K562 (cell line): ENCODE measurements at regions of chr6 and their contacts with region 1.

Region 1: GRCh38 chr6:161748535-161749416 is 474.9 kb upstream of the AGPAT4 start:
- DNase-seq: peak; percentile 53 to 68 (median 60)
- ATAC-seq: peak; percentile 93
- H3K4me3 ChIP-seq: no peak overlapping the region
- H3K27ac ChIP-seq: no peak overlapping the region
- H3K4me1 ChIP-seq: no peaks in the 10 kb centered on the region
- H3K27me3 ChIP-seq: no peaks in the 10 kb centered on the region; a peak in 1 of 5 replicates
- CTCF ChIP-seq: peak; percentile 69 to 72 (median 70)
- EP300 ChIP-seq: no peak
- POLR2A ChIP-seq: no peak
- RAD21 ChIP-seq: peak; percentile 48 to 61

Region 2: DNA sequence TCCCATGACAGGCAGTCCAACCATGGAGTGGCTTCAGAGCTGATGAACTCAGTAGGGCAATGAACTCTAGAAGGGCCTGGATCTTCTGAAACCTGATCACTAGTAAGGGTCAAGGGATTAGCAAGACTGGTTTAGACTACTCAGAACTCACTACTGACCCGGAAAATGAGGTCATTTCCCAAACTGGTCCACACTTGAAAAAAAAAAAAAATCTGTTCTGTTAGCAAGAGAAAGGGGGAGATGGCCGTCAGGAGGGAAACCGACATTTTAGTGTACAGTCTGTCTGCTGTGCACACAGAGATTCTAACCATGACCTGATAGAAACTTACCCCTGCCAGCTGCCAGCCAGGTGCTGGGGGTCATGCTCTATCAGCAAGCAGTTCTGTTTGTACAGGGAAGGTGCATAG is 212.5 kb before region 1 on chr6:
- CTCF ChIA-PET with region 1: no interaction called
- POLR2A ChIA-PET with region 1: no interaction called
- in situ Hi-C with region 1: no loop called
- intact Hi-C with region 1: no loop called
- DNase-seq: no peak
- ATAC-seq: no peak
- H3K4me3 ChIP-seq: no peak overlapping the region
- H3K27ac ChIP-seq: no peak overlapping the region
- H3K4me1 ChIP-seq: no peaks in the 10 kb centered on the region; a peak in 1 of 5 replicates
- H3K27me3 ChIP-seq: peaks cover 4 to 8% of the 10 kb centered on the region in 2 experiments; a peak in 4 of 5 replicates
- CTCF ChIP-seq: no peak
- EP300 ChIP-seq: no peak
- POLR2A ChIP-seq: no peak
- RAD21 ChIP-seq: no peak

Region 3: GRCh38 chr6:161922631-161923119 is 173.9 kb after region 1 on chr6:
- CTCF ChIA-PET with region 1: interaction called, 3 read pairs
- POLR2A ChIA-PET with region 1: no interaction called
- in situ Hi-C with region 1: no loop called
- intact Hi-C with region 1: loop called (anchors 2 kb)
- DNase-seq: peak; percentile 24 to 55 (median 38)
- ATAC-seq: peak; percentile 97
- H3K4me3 ChIP-seq: no peak overlapping the region
- H3K27ac ChIP-seq: no peak overlapping the region
- H3K4me1 ChIP-seq: no peaks in the 10 kb centered on the region
- H3K27me3 ChIP-seq: no peaks in the 10 kb centered on the region
- CTCF ChIP-seq: peak; percentile 42 to 61 (median 59); a peak in 5 of 6 replicates
- EP300 ChIP-seq: no peak
- POLR2A ChIP-seq: no peak
- RAD21 ChIP-seq: peak in 1 of 2 experiments; percentile 33; a peak in 2 of 4 replicates